Activated naive CD4-positive, alpha-beta T cell treated with anti-CD3 and anti-CD28 coated beads for 36 hours (primary cell): ENCODE measurements at regions of chr1 and their contacts with region 1.

Region 1: DNA sequence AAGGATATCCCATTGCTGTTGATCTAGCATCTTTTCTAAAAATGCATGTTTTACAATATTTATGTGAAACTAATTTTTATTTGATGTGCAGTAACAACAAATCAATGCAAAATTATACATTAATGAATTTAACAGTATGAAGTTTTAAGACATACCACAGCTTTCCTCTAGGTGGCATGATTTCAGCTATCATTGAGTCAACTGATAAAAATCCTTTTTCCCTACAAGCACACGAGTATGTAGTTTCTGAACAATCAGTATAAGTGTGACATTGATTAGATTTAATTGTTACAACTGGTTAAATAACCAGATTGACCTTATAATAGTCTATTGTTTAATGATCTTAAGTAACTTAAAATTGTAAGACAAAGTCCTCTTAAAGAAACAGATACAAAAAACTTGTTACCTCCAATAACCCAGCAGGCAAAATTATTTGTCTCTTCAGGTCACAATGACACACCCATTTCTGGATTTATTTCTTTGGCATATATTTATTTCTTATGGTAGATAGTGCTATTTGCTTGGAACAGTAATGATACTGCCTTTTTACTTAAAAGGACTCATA is 5.8 kb upstream of the TGFB2 start:
- DNase-seq: no peak
- H3K4me3 Mint-ChIP-seq: no peak overlapping the region
- H3K27ac Mint-ChIP-seq: no peak overlapping the region
- H3K4me1 Mint-ChIP-seq: no peaks in the 10 kb centered on the region
- H3K27me3 Mint-ChIP-seq: peaks cover 17% of the 10 kb centered on the region

Region 2: GRCh38 chr1:219385786-219386427 is 1046.6 kb after region 1 on chr1:
- CTCF ChIA-PET with region 1: no interaction called
- intact Hi-C with region 1: loop called (anchors 2 kb)
- DNase-seq: peak; percentile 60
- H3K4me3 Mint-ChIP-seq: no peak overlapping the region
- H3K27ac Mint-ChIP-seq: no peak overlapping the region
- H3K4me1 Mint-ChIP-seq: no peaks in the 10 kb centered on the region
- H3K27me3 Mint-ChIP-seq: no peaks in the 10 kb centered on the region

Region 3: DNA sequence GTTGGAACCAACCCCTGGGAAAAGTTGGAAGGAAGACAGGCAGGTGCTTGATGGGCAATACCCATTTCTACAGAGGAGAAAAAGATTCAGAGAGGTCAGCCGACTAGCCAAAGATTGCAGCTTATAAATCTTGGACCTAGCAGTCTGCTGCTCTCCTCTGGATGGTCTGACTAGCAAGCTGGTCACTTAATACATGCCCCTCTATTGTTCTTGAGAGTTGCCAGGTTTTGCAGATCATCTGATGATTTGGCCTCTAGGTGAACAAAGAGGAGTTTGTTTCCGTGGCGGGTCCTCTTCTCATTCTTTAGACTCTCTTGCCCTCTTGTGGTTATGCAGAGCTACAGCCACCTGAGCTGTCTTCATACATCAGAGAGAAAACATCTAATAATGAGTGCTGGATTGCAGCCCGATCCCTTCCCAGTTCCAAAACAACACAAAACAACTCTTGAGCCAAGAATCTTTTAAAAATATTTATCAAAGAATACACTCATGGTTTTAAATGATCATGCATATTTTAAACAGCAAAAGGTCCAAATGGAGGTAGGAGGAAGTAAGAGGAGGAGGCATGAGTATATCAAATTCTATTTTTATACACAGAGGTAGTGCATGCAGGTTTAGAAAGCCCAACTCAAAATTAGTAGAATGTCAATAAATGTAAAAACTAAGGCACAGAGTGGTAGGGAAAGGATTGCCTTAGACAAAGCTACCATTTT is 1473.3 kb after region 1 on chr1:
- CTCF ChIA-PET with region 1: no interaction called
- intact Hi-C with region 1: loop called (anchors 5 kb)
- DNase-seq: peak; percentile 16
- H3K4me3 Mint-ChIP-seq: no peak overlapping the region
- H3K27ac Mint-ChIP-seq: no peak overlapping the region
- H3K4me1 Mint-ChIP-seq: no peaks in the 10 kb centered on the region
- H3K27me3 Mint-ChIP-seq: peaks cover 17% of the 10 kb centered on the region